ENCODE measurements at regions of chrX and their contacts with region 1.

Region 1: DNA sequence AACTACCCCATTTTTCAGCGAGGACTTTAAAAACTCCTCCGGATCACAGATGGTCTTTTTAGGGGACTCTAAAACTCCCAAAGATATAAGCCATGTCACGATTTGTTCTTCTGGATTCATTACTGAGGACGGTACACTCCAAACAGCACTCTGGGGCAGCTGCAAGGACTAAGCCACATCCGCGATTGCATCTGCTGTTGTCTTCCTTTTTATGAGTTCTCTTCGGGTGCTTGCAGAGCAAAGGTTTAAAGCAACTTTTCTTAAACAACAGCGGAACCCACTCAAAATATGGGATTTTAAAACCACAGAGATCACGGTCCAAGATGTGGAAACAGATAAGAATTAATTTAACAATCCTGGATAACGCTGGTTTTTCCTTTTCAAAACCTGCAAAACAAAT is at the start of gene ARHGEF6:
- DNase-seq: peak; percentile 60
- H3K4me3 Mint-ChIP-seq: peak within 1 kb of the TSS; percentile 82
- H3K27ac Mint-ChIP-seq: peak within 1 kb of the TSS; percentile 95
- H3K4me1 Mint-ChIP-seq: peaks cover 55% of the 10 kb centered on the region
- H3K27me3 Mint-ChIP-seq: no peaks in the 10 kb centered on the region
- total RNA-seq, gene ARHGEF6: 119 to 121 TPM

Region 2: GRCh38 chrX:136752796-136753195 is 28.0 kb before region 1 on chrX:
- CTCF ChIA-PET with region 1: no interaction called
- POLR2A ChIA-PET with region 1: interaction called, 14 read pairs
- DNase-seq: no peak
- H3K4me3 Mint-ChIP-seq: no peak overlapping the region
- H3K27ac Mint-ChIP-seq: no peak overlapping the region
- H3K4me1 Mint-ChIP-seq: peaks cover 70% of the 10 kb centered on the region
- H3K27me3 Mint-ChIP-seq: no peaks in the 10 kb centered on the region

Region 3: DNA sequence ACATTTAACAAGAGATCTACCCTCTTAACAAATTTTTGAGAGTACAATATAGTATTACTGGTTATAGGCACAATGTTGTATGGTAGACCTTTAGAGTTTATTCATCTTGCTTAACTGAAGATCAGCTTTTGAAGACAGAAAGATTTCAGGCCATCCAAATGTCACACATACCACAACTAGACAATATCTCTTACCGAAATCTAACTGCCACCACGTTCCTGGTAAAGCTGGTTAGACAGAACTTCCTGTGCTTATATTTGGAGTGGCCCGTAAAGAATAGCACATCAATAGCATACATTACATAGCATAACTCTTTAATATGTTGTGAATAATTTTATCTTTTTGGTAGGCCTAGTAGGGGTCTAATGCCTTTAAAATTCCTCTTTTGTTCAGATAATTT is 29.7 kb after region 1 on chrX:
- CTCF ChIA-PET with region 1: no interaction called
- POLR2A ChIA-PET with region 1: interaction called, 20 read pairs
- DNase-seq: peak; percentile 18
- H3K4me3 Mint-ChIP-seq: no peak overlapping the region
- H3K27ac Mint-ChIP-seq: peak overlapping the region; percentile 81
- H3K4me1 Mint-ChIP-seq: peaks cover 24% of the 10 kb centered on the region
- H3K27me3 Mint-ChIP-seq: no peaks in the 10 kb centered on the region

Region 4: DNA sequence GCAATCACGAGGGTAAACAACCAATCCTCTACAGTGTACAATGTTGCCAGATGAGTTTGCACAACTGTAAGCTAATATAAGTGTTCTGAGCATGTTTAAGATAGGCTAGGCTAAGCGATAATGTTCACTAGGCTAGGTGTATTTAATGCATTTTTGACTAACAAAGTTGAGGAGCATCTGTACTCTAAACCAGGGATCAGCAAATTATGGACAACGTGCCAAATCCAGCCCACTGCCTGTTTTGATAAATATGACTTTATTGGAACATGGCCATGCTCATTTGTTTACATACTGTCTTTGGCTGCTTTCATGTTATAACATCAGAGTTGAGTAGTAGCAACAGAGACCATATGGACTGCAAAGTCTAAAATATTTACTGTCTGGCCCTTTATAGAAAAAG is 46.3 kb after region 1 on chrX:
- CTCF ChIA-PET with region 1: no interaction called
- POLR2A ChIA-PET with region 1: no interaction called
- DNase-seq: no peak
- H3K4me3 Mint-ChIP-seq: no peak overlapping the region
- H3K27ac Mint-ChIP-seq: no peak overlapping the region
- H3K4me1 Mint-ChIP-seq: no peaks in the 10 kb centered on the region
- H3K27me3 Mint-ChIP-seq: no peaks in the 10 kb centered on the region

Region 5: GRCh38 chrX:136880452-136881013 is 99.8 kb after region 1 on chrX and contains the start of gene RBMX:
- CTCF ChIA-PET with region 1: interaction called, 11 read pairs
- POLR2A ChIA-PET with region 1: interaction called, 124 read pairs
- DNase-seq: peak; percentile 91
- H3K4me3 Mint-ChIP-seq: peak within 1 kb of the TSS; percentile 92
- H3K27ac Mint-ChIP-seq: peak within 1 kb of the TSS; percentile 98
- H3K4me1 Mint-ChIP-seq: peaks cover 22% of the 10 kb centered on the region
- H3K27me3 Mint-ChIP-seq: no peaks in the 10 kb centered on the region
- total RNA-seq, gene RBMX: 225 to 236 TPM

Measured in activated CD4-positive, alpha-beta memory T cell treated with anti-CD3 and anti-CD28 coated beads, Interleukin-2, amount 10 ng/mL, durations not matched to agents 7 days and 5 days (primary cell).